Activated naive CD4-positive, alpha-beta T cell treated with anti-CD3 and anti-CD28 coated beads, Interleukin-2, amount 10 ng/mL, durations not matched to agents 7 days and 5 days (primary cell): ENCODE measurements at regions of chr3 and their contacts with region 1.

Region 1: GRCh38 chr3:187139126-187139894 is at the start of gene RPL39L:
- DNase-seq: peak; percentile 94
- H3K4me3 Mint-ChIP-seq: peak within 1 kb of the TSS; percentile 85
- H3K27ac Mint-ChIP-seq: peak within 1 kb of the TSS; percentile 95
- H3K4me1 Mint-ChIP-seq: peaks cover 24% of the 10 kb centered on the region
- H3K27me3 Mint-ChIP-seq: peaks cover 13% of the 10 kb centered on the region

Region 2: GRCh38 chr3:187150599-187150998 is 11.3 kb after region 1 on chr3:
- CTCF ChIA-PET with region 1: interaction called, 70 read pairs
- DNase-seq: peak; percentile 73
- H3K4me3 Mint-ChIP-seq: no peak overlapping the region
- H3K27ac Mint-ChIP-seq: no peak overlapping the region
- H3K4me1 Mint-ChIP-seq: peaks cover 6% of the 10 kb centered on the region
- H3K27me3 Mint-ChIP-seq: peaks cover 57% of the 10 kb centered on the region

Region 3: DNA sequence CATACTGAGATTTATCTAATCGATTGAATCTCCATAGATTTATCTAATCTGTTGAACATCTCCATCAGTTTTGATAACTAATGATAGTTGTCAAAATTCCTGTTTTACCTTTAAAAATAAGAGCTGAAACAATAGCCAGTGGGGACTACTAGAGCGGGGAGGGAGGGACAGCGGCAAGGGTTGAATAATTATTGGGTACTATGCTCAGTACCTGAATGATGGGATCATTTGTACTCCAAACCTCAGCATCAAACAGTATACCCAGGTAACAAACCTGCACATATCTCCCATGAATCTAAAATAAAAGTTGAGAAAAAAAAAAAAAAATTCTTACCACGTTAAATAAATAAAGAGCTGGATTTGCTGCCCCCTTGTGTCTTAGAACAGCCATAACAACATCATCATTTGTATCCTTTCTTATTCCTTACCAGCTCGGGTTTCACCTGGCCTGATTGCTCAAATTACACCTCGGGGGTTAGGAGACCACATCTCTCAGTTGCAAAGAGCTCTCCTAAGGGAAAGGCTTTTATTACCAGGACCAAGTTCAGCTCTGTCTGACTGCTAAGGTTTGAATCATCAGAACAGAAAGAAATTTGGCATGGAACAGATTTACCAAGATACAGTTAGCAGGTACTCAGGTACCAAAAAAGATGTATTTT is 25.7 kb after region 1 on chr3:
- CTCF ChIA-PET with region 1: interaction called, 24 read pairs
- DNase-seq: peak; percentile 40
- H3K4me3 Mint-ChIP-seq: no peak overlapping the region
- H3K27ac Mint-ChIP-seq: no peak overlapping the region
- H3K4me1 Mint-ChIP-seq: peaks cover 4% of the 10 kb centered on the region
- H3K27me3 Mint-ChIP-seq: peaks cover 34% of the 10 kb centered on the region